ENCODE measurements at regions of chr7 and their contacts with region 1.

Region 1: DNA sequence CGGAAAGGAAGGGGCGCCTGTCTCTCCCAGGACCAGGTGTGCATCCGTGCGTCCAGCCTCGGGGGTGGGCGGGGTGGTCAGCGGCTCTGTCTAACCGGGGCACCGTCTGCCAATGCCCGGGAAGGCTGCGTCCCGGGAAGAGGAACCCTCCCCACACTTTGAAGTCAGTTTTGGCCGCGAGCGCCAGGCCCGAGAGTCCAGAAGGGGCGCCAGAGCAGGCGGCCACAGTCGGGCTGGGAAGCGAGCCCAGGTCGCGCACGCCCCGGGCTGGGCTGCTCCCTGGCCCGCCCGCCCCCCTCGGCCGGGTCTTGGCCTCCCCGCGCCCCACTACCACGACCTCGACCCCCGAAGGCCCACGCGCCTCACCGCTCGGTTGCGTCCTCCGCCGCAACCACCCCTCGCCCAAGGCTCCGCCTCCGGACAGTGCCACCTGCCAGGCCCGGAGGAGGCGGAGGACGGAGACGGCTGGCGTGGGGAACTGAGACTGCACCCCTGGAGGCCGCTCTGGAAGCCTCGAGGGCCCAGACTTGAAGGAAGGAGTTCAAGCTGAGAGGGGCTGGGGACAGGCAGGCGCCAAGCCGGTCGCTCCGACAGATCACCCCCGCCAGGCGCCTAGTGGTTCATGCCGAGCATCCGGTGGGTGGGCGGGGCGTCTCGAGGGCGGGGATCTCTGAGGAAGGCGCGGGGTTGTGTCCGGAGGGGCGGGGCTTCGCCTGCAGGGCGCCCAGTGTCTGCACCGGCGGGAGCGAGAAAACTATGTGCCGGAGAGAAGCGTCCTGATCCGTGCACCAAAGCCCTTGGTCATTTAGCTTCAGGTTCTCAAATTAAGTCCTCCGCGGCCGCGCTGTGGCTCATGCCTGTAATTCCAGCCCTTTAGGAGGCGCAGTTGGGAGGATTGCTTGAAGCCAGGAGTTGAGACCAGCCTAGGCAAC is at the start of gene BRAT1:
- DNase-seq: peak; percentile 99
- ATAC-seq: peak; percentile 89
- H3K4me3 Mint-ChIP-seq: peak within 1 kb of the TSS; percentile 89
- H3K27ac Mint-ChIP-seq: peak within 1 kb of the TSS; percentile 85
- H3K4me1 Mint-ChIP-seq: peaks cover 33% of the 10 kb centered on the region
- H3K27me3 Mint-ChIP-seq: no peaks in the 10 kb centered on the region
- total RNA-seq, gene BRAT1: 34.7 to 35.9 TPM

Region 2: DNA sequence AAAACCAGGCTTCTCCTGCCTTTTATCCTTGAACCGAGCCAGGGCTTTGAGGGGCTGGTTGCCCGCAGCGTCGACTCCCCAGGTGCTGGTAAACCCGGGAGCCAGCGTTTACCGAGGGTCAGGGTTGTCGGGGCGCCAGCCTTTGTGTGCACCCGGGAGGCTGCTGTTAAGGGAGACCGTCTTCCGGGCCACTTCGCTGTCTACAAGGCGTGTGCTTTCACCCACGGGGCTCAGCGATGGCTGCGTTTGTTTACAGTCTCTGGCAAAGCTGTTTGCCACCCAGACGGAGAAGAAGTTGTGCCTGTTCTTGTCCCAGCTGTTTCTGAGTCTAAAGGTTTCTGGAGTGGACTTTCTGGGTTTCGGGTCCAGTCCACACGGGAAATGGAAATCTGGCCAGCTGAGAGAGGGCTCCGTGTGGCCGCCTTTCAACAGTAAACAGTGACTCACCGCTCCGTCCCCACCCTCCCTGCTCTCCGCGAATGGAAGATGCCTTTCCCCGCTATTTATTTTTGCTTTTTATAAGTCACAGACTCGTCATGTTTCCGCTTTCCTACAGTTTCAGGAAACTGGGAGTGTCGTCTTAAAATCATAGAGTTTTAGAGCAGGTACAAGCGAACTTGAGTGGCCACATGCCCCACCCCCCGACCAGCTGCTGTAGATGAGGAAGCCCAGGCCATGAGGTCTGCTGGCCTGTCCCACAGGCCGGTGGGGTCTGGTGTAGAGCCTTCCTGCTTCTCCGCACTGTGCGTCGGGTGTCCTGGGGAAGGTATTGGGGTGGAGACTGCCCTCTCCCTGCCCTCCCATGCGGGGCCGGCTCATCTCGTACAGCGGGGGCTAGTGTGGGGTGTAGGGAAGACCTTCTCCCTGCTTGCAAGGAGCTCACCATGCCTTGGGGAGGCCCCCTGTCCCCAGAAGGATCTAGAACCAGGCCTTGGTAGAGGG is 1022.6 kb before region 1 on chr7:
- CTCF ChIA-PET with region 1: no interaction called
- POLR2A ChIA-PET with region 1: no interaction called
- intact Hi-C with region 1: loop called in 1 of 2 experiments (anchors 2 kb)
- DNase-seq: peak; percentile 78
- ATAC-seq: peak; percentile 65
- H3K4me3 Mint-ChIP-seq: peak overlapping the region; percentile 89
- H3K27ac Mint-ChIP-seq: peak overlapping the region; percentile 89
- H3K4me1 Mint-ChIP-seq: peaks cover 27% of the 10 kb centered on the region
- H3K27me3 Mint-ChIP-seq: no peaks in the 10 kb centered on the region

Region 3: GRCh38 chr7:2241580-2242540 is 313.5 kb before region 1 on chr7 and contains the starts of genes MRM2 and NUDT1:
- CTCF ChIA-PET with region 1: no interaction called
- POLR2A ChIA-PET with region 1: no interaction called
- intact Hi-C with region 1: loop called in 1 of 2 experiments (anchors 1 kb)
- DNase-seq: peak; percentile 84
- ATAC-seq: peak; percentile 82
- H3K4me3 Mint-ChIP-seq: peak within 1 kb of the TSS; percentile 88
- H3K27ac Mint-ChIP-seq: peak within 1 kb of the TSS; percentile 88
- H3K4me1 Mint-ChIP-seq: peaks cover 10% of the 10 kb centered on the region
- H3K27me3 Mint-ChIP-seq: no peaks in the 10 kb centered on the region
- total RNA-seq, gene MRM2: 28.7 to 32.1 TPM
- total RNA-seq, gene NUDT1: 52.5 to 100 TPM

Region 4: GRCh38 chr7:2519119-2519930 is 36.1 kb before region 1 on chr7 and contains the start of gene LFNG:
- CTCF ChIA-PET with region 1: interaction called, 4 read pairs
- POLR2A ChIA-PET with region 1: no interaction called
- intact Hi-C with region 1: loop called (anchors 1 kb)
- DNase-seq: peak; percentile 91
- ATAC-seq: peak; percentile 75
- H3K4me3 Mint-ChIP-seq: peak within 1 kb of the TSS; percentile 89
- H3K27ac Mint-ChIP-seq: peak within 1 kb of the TSS; percentile 73
- H3K4me1 Mint-ChIP-seq: peaks cover 32% of the 10 kb centered on the region
- H3K27me3 Mint-ChIP-seq: no peaks in the 10 kb centered on the region
- total RNA-seq, gene LFNG: 14.9 to 23.3 TPM

Region 5: GRCh38 chr7:2567679-2568278 is 12.4 kb after region 1 on chr7:
- CTCF ChIA-PET with region 1: interaction called, 3 read pairs
- POLR2A ChIA-PET with region 1: no interaction called
- intact Hi-C with region 1: loop called in 1 of 2 experiments (anchors 1 kb)
- DNase-seq: peak; percentile 12
- ATAC-seq: no peak
- H3K4me3 Mint-ChIP-seq: no peak overlapping the region
- H3K27ac Mint-ChIP-seq: no peak overlapping the region
- H3K4me1 Mint-ChIP-seq: peaks cover 25% of the 10 kb centered on the region
- H3K27me3 Mint-ChIP-seq: no peaks in the 10 kb centered on the region

Region 6: DNA sequence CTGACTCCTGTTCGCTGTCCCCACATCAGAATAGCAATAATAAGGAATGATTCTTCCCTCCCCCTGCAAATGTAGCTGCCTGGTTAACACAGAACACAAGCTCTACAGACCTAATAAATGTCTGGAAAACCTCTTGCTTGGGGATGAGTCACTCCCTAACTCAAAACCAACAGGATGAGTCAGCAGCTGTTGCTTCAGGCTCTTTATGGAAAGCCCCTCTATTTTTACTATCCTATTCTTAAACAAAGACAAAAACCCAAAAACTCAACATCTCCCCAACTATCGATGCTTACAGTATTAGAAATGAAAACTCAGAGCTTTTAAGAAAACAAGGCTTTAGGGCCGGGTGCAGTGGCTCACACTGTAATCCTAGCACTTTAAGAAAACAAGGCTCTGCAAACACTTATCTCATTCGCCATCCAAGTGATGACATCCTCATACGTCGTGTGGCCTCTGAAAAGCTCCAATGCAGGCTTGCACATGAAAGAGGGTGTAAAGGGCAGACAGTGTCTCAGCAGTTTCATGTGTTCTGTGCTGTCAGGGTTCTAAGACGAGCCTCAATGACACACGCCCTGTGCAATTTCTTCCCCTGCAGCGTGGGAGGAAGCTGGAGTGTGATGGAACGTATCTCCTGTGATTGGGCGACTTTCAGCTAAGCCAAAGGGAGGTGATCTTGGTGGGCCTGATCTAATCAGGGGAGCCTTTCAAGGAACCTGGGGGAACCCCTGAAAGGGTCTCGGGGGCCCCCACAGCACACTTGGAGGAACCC is 202.7 kb after region 1 on chr7:
- CTCF ChIA-PET with region 1: no interaction called
- POLR2A ChIA-PET with region 1: no interaction called
- intact Hi-C with region 1: loop called in 1 of 2 experiments (anchors 2 kb)
- DNase-seq: peak; percentile 91
- ATAC-seq: peak; percentile 96
- H3K4me3 Mint-ChIP-seq: peak overlapping the region; percentile 50
- H3K27ac Mint-ChIP-seq: peak overlapping the region; percentile 93
- H3K4me1 Mint-ChIP-seq: peaks cover 43% of the 10 kb centered on the region
- H3K27me3 Mint-ChIP-seq: no peaks in the 10 kb centered on the region

Region 7: DNA sequence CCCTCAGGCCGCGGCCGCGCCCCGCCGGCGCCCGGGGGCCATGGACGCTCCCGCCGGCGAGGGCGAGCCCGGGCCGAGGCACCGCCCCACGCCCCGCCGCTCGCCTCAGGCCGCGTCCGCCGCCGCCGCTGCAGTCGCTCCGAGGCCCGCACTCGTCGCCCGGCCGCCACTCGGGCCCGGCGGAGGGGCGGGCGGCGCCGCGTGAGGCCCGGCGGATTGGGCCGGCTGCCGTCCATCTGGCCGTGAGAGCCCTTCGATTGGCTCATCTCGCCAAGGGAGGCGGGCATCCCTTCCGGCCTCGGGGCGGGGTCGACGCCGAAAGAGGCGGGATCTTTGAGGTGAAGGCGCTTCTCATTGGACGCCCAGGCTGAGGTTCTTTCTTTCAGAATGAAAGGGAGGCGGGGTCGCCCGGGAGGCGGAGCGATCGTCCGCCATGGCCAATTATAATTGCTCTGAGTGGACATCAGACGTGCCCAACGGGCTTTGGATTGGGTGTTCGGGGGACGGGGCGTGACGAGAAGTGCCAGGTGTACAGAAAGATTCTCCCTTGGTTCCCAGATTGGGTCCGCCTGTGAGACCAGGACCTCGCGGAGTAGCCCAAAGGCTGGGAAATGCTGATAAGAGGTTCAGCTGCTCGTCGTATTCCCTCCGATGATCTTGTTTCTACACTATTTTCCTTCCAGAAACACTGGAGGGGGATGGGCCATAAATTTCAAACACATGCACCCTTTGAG is 288.9 kb after region 1 on chr7 and contains the start of gene GNA12:
- CTCF ChIA-PET with region 1: no interaction called
- POLR2A ChIA-PET with region 1: no interaction called
- intact Hi-C with region 1: loop called in 1 of 2 experiments (anchors 1 kb)
- DNase-seq: peak; percentile 99
- ATAC-seq: peak; percentile 96
- H3K4me3 Mint-ChIP-seq: peak within 1 kb of the TSS; percentile 75
- H3K27ac Mint-ChIP-seq: peak within 1 kb of the TSS; percentile 44
- H3K4me1 Mint-ChIP-seq: peaks cover 23% of the 10 kb centered on the region
- H3K27me3 Mint-ChIP-seq: no peaks in the 10 kb centered on the region
- total RNA-seq, gene GNA12: 19.5 to 22.6 TPM